ENCODE measurements at regions of chr11 and their contacts with region 1.

Region 1: GRCh38 chr11:66616379-66617154 is at the start of gene RBM14:
- DNase-seq: peak; percentile 99 to 100 (median 99)
- H3K4me3 ChIP-seq: peak within 1 kb of the TSS; percentile 70 to 99
- H3K4me3 Mint-ChIP-seq: peak within 1 kb of the TSS; percentile 96 to 100 (median 98)
- H3K27ac ChIP-seq: peak within 1 kb of the TSS; percentile 97
- H3K27ac Mint-ChIP-seq: peak within 1 kb of the TSS; percentile 98 to 100 (median 99)
- H3K4me1 ChIP-seq: peaks cover 40% of the 10 kb centered on the region
- H3K4me1 Mint-ChIP-seq: peaks cover 30 to 63% (median 40%) of the 10 kb centered on the region in 4 donors
- H3K27me3 ChIP-seq: no peaks in the 10 kb centered on the region
- H3K27me3 Mint-ChIP-seq: no peaks in the 10 kb centered on the region
- total RNA-seq, gene RBM14: 158 to 196 TPM

Region 2: DNA sequence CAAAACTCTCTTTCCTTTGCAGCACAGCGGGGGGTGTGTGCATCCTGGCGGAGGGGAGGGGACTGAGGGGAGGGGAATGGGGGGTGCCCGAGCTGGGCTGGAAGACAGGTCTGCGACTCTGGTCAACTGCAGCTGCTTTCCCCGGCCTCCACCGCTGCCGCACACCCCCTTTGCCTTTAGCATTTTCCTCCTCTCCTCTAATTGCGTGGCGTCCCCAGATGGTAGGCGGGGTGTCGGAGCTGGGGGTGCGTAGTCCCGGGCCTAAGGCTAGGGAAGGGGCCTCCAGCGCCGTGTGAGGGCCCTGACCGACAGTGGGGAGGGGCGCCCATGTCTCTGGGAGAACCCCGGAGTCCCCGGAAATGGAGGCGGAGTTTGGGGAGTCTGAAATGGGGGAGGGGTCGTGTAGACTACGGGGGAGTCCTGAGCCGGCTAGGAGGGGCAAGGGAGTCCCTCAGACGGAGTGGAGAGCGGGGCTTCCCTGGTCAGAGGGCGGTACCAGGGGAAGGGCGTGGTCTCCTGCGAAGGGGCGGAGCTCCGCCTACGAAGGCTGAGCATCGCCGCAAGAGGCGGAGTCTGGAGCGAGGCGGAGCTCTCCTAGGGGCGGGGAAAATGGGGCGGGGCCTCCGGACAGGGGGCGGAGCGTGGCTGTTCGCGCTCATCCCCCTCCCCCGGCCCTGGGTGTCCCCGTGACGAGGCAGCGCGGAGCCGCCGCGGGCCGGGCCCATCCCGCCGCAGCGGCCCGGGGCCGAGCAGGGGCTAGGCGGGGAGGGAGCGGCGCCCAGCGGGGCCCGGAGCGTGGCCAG is 150.1 kb before region 1 on chr11 and contains the start of gene PELI3:
- CTCF ChIA-PET with region 1: no interaction called
- POLR2A ChIA-PET with region 1: interaction called, 4 read pairs
- intact Hi-C with region 1: loop called (anchors 5 kb)
- DNase-seq: peak; percentile 91 to 95 (median 92)
- H3K4me3 ChIP-seq: peak within 1 kb of the TSS; percentile 58 to 65
- H3K4me3 Mint-ChIP-seq: peak within 1 kb of the TSS; percentile 89 to 94 (median 90)
- H3K27ac ChIP-seq: peak within 1 kb of the TSS; percentile 81
- H3K27ac Mint-ChIP-seq: peak within 1 kb of the TSS; percentile 91 to 97 (median 95)
- H3K4me1 ChIP-seq: peaks cover 20% of the 10 kb centered on the region
- H3K4me1 Mint-ChIP-seq: peaks cover 13 to 33% (median 21%) of the 10 kb centered on the region in 4 donors
- H3K27me3 ChIP-seq: no peaks in the 10 kb centered on the region
- H3K27me3 Mint-ChIP-seq: no peaks in the 10 kb centered on the region
- total RNA-seq, gene PELI3: 25.3 to 25.9 TPM

Region 3: DNA sequence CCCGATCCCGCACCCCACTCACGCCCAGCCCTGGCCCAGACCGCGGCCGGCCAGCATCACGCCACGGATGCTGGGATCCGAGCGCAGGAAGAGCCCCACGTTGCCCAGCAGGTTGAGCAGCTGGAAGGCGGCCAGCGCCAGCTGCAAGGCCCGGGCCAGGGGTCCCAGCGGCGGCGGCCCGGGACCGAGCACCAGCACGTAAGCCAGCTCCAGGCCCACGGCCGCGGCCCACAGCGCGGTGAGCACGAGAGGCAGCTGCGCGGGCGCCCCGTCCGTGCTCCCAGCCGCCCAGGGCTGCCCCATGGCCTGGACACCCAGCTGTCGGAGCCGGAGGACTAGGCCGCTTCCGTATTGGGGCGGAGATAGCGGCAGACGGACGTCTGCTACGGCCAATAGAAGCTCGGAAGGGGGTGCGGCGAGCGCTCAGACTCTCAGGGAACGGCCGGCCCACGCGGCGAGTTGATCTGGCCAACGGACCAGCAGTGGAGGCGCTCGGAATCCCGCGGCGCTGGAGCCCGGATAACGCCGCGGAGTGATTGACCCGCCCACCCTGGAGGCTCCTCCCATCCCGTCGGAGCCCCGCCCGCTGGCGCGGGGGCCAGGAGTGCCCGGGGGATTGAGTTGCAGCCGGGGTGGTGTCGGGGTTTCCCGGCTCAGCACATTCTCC is 70.7 kb before region 1 on chr11 and contains the start of gene ZDHHC24:
- CTCF ChIA-PET with region 1: no interaction called
- POLR2A ChIA-PET with region 1: interaction called, 11 read pairs
- intact Hi-C with region 1: loop called (anchors 1 kb)
- DNase-seq: peak; percentile 79 to 86 (median 82)
- H3K4me3 ChIP-seq: peak within 1 kb of the TSS; percentile 82 to 84
- H3K4me3 Mint-ChIP-seq: peak within 1 kb of the TSS; percentile 85 to 96 (median 92)
- H3K27ac ChIP-seq: peak within 1 kb of the TSS; percentile 82
- H3K27ac Mint-ChIP-seq: peak within 1 kb of the TSS; percentile 67 to 98 (median 92)
- H3K4me1 ChIP-seq: peaks cover 35% of the 10 kb centered on the region
- H3K4me1 Mint-ChIP-seq: peaks cover 22 to 59% (median 34%) of the 10 kb centered on the region in 4 donors
- H3K27me3 ChIP-seq: no peaks in the 10 kb centered on the region
- H3K27me3 Mint-ChIP-seq: no peaks in the 10 kb centered on the region
- total RNA-seq, gene ZDHHC24: 24.5 to 27.2 TPM

Region 4: GRCh38 chr11:66579017-66579606 is 37.5 kb before region 1 on chr11:
- CTCF ChIA-PET with region 1: interaction called, 3 read pairs
- POLR2A ChIA-PET with region 1: interaction called, 4 read pairs
- intact Hi-C with region 1: loop called (anchors 1 kb)
- DNase-seq: peak; percentile 64 to 72 (median 68)
- H3K4me3 ChIP-seq: no peak overlapping the region
- H3K4me3 Mint-ChIP-seq: peak overlapping the region in 2 of 8 donors; percentile 33 to 47
- H3K27ac ChIP-seq: no peak overlapping the region
- H3K27ac Mint-ChIP-seq: peak overlapping the region in 3 of 7 donors; percentile 9 to 68 (median 25)
- H3K4me1 ChIP-seq: peaks cover 5% of the 10 kb centered on the region
- H3K4me1 Mint-ChIP-seq: peaks cover 0 to 12% (median 6%) of the 10 kb centered on the region in 4 donors
- H3K27me3 ChIP-seq: no peaks in the 10 kb centered on the region
- H3K27me3 Mint-ChIP-seq: peaks cover 0 to 7% of the 10 kb centered on the region in 2 donors

Region 5: DNA sequence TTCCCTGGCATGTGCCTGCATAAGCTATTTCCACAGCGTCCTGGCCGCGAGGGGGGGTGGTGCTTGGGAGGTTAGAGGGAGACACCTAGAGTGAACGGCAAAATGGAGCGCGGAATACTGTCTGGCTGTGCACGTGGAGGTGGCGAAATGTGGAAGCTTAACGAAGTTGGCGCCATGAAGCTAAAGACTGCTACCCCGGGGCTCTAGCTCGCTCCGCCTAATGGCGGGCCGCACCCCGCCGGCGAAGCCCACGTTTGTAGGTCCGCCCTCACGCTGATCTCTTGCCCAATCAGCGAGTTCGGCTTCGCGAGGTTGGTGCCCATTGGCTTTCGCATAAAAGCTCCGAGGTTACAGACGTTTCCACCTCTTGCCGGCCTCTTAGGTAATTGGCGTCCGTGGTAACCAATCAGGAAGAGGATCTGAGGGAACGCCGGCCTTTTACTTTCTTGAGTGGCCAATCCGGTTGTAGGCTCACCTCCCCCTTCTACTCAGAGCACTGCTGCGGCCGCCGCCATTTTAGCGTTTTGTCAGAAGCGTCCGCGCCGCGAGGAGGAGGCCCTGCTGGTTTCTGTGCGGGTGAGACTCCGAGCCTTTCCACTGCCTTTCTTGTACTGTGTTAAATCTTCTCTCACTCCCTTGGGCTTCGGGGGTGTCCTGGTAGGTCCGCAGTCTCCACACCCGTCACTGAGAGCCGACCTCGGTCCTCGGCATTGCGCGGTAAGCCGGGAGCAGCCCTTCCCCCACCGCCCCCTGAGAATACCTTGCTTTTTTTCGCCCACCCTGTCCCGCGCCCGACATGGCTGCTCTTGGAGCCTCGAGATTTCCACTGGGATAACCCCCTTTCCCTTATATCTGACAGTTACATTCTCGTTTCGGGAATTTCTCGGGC is 21.9 kb after region 1 on chr11 and contains the start of gene RBM4:
- CTCF ChIA-PET with region 1: interaction called, 35 read pairs
- POLR2A ChIA-PET with region 1: interaction called, 442 read pairs
- intact Hi-C with region 1: loop called (anchors 1 kb)
- DNase-seq: peak; percentile 95 to 99 (median 98)
- H3K4me3 ChIP-seq: peak within 1 kb of the TSS; percentile 63 to 96
- H3K4me3 Mint-ChIP-seq: peak within 1 kb of the TSS; percentile 97 to 99 (median 98)
- H3K27ac ChIP-seq: peak within 1 kb of the TSS; percentile 88
- H3K27ac Mint-ChIP-seq: peak within 1 kb of the TSS; percentile 94 to 99 (median 99)
- H3K4me1 ChIP-seq: peaks cover 49% of the 10 kb centered on the region
- H3K4me1 Mint-ChIP-seq: peaks cover 48 to 81% (median 59%) of the 10 kb centered on the region in 4 donors
- H3K27me3 ChIP-seq: no peaks in the 10 kb centered on the region
- H3K27me3 Mint-ChIP-seq: no peaks in the 10 kb centered on the region
- total RNA-seq, gene RBM4: 183 to 189 TPM

Region 6: GRCh38 chr11:66651016-66651415 is 34.4 kb after region 1 on chr11:
- CTCF ChIA-PET with region 1: no interaction called
- POLR2A ChIA-PET with region 1: interaction called, 17 read pairs
- intact Hi-C with region 1: no loop called
- DNase-seq: no peak
- H3K4me3 ChIP-seq: no peak overlapping the region
- H3K4me3 Mint-ChIP-seq: no peak overlapping the region
- H3K27ac ChIP-seq: no peak overlapping the region
- H3K27ac Mint-ChIP-seq: peak overlapping the region in 2 of 7 donors; percentile 8 to 54
- H3K4me1 ChIP-seq: peaks cover 31% of the 10 kb centered on the region
- H3K4me1 Mint-ChIP-seq: peaks cover 36 to 65% (median 49%) of the 10 kb centered on the region in 4 donors
- H3K27me3 ChIP-seq: no peaks in the 10 kb centered on the region
- H3K27me3 Mint-ChIP-seq: no peaks in the 10 kb centered on the region

Region 7: GRCh38 chr11:66842896-66843775 is 226.6 kb after region 1 on chr11 and contains the start of gene RCE1:
- CTCF ChIA-PET with region 1: no interaction called
- POLR2A ChIA-PET with region 1: interaction called, 12 read pairs
- intact Hi-C with region 1: no loop called
- DNase-seq: peak; percentile 85 to 93 (median 90)
- H3K4me3 ChIP-seq: peak within 1 kb of the TSS; percentile 88 to 96
- H3K4me3 Mint-ChIP-seq: peak within 1 kb of the TSS; percentile 87 to 96 (median 93)
- H3K27ac ChIP-seq: peak within 1 kb of the TSS; percentile 97
- H3K27ac Mint-ChIP-seq: peak within 1 kb of the TSS; percentile 91 to 98 (median 96)
- H3K4me1 ChIP-seq: peaks cover 50% of the 10 kb centered on the region
- H3K4me1 Mint-ChIP-seq: peaks cover 33 to 55% (median 44%) of the 10 kb centered on the region in 4 donors
- H3K27me3 ChIP-seq: no peaks in the 10 kb centered on the region
- H3K27me3 Mint-ChIP-seq: no peaks in the 10 kb centered on the region
- total RNA-seq, gene RCE1: 30.0 to 34.5 TPM